Lower leg skin (tissue), 4 donors: ENCODE measurements at regions of chr3 and their contacts with region 1.

Region 1: DNA sequence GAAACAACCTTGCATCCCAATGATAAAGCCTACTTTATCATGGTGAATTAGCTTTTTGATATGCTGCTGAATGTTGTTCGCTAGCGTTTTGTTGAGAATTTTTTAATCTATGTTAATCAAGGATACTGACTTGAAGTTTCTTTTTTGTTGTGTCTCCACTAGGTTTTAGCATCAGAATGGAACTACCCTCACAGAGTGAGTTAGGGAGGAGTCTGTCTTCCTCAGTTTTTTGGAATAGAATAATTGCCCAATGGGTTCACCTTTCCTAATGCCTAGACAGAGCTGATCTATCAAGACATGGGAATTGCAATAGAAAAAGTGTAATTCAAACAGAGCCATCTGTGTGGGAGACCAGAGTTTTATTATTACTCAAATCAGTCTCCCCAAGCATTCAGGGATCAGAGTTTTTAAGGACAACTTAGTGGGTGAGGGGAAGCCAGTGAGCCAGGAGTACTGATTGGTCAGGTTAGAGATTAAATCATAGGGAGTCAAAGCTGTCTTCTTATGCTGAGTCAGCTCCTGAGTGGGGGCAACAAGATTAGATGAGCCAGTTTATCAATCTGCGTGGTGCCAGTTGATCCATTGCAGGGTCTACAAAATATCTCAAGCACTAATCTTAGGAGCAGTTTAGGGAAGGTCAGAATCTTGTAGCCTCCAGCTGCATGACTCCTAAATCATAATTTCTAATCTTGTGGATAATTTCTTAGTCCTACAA is 237.4 kb upstream of the PPP2R3A start:
- DNase-seq: no peak
- H3K4me3 ChIP-seq: no peak overlapping the region
- CTCF ChIP-seq: no peak
- POLR2A ChIP-seq: no peak

Region 2: DNA sequence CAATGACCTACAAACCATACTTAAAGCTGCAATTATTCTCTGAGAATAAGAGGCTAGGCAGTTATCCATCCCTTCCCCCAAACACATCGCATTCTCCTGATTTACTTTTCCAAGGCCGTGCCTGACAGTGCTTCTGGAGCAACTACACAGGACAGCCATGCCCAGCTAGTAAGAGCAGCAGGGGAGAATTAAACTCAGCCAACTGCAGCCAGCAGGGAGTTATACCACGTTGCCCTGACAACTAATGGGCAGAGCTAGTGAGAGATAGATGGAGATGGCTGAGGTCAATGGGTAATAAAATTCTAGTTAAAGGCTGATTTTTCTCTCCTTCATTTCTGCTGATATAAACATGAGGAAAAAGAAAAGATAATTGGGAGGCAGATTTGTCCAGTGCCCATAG is 43.6 kb after region 1 on chr3:
- intact Hi-C with region 1: loop called (anchors 1 kb)
- DNase-seq: no peak
- H3K4me3 ChIP-seq: no peak overlapping the region
- CTCF ChIP-seq: no peak
- POLR2A ChIP-seq: no peak

Region 3: GRCh38 chr3:135792174-135792573 is 64.0 kb after region 1 on chr3:
- intact Hi-C with region 1: no loop called
- DNase-seq: no peak
- H3K4me3 ChIP-seq: no peak overlapping the region
- CTCF ChIP-seq: no peak
- POLR2A ChIP-seq: no peak

Region 4: DNA sequence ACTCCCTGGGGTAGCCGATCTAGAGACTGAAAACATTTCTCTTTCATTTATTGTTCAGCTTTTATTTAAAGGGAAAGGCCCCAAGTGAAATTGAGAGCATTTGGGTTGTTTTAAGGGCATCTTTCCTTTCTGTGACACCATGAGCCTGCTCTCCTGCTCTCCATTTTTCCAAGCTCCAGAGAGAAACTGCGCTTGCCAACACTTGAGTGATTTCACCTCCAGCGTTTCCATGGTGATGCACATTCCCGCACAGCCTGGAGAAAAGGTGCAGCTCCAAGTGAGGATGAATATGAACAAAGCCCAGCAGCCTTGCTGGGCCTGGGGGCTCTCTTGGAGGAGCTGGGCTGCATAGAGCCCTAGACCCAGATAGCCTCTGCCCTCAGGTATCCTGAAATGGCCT is 78.2 kb after region 1 on chr3:
- intact Hi-C with region 1: no loop called
- DNase-seq: no peak
- H3K4me3 ChIP-seq: no peak overlapping the region
- CTCF ChIP-seq: no peak
- POLR2A ChIP-seq: no peak